CD14-positive monocyte (primary cell): ENCODE measurements at regions of chr18 and their contacts with region 1.

Region 1: DNA sequence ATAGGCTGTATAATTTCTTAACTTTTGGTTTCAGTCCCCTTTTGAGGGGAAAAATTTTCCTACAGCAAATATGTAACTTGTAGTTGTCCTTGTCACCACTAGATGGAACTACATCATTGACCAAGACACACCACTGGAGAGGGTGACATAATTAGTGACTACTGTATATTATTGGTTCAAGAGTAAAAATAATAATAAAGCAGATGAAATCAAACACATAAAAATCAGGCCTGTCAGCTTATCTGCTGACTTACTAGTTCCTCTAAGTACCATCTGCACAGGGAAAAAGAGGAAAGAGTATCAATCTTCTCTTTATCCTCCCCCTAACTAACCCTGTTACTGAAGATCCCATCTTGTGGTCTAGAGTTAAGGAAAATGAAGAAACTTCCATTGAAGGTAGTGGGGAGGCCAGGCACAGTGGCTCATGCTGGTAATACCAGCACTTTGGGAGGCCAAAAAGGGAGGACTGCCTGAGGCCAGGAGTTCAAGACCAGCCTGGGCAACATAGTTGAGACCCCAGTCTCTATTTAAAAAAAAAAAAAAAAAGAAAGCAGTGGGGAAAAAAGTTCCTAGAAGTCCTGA is 29.6 kb upstream of the ENOSF1 start:
- DNase-seq: peak; percentile 9 to 52 (median 45)
- H3K4me3 ChIP-seq: no peak overlapping the region
- H3K4me3 Mint-ChIP-seq: no peak overlapping the region
- H3K27ac ChIP-seq: no peak overlapping the region
- H3K27ac Mint-ChIP-seq: no peak overlapping the region
- H3K4me1 ChIP-seq: no peaks in the 10 kb centered on the region
- H3K4me1 Mint-ChIP-seq: no peaks in the 10 kb centered on the region
- H3K27me3 ChIP-seq: peaks cover 19 to 54% of the 10 kb centered on the region in 2 donors
- H3K27me3 Mint-ChIP-seq: peaks cover 23 to 35% (median 29%) of the 10 kb centered on the region in 3 donors
- CTCF ChIP-seq: peak; percentile 89

Region 2: GRCh38 chr18:765764-766549 is 23.9 kb after region 1 on chr18:
- intact Hi-C with region 1: no loop called
- DNase-seq: no peak
- H3K4me3 ChIP-seq: no peak overlapping the region
- H3K4me3 Mint-ChIP-seq: no peak overlapping the region
- H3K27ac ChIP-seq: no peak overlapping the region
- H3K27ac Mint-ChIP-seq: no peak overlapping the region
- H3K4me1 ChIP-seq: no peaks in the 10 kb centered on the region
- H3K4me1 Mint-ChIP-seq: no peaks in the 10 kb centered on the region
- H3K27me3 ChIP-seq: peaks cover 5 to 30% of the 10 kb centered on the region in 2 donors
- H3K27me3 Mint-ChIP-seq: peaks cover 25 to 42% (median 26%) of the 10 kb centered on the region in 3 donors
- CTCF ChIP-seq: no peak

Region 3: GRCh38 chr18:830315-830901 is 88.4 kb after region 1 on chr18:
- intact Hi-C with region 1: loop called in 1 of 2 experiments (anchors 5 kb)
- DNase-seq: peak; percentile 49 to 80 (median 61)
- H3K4me3 ChIP-seq: no peak overlapping the region
- H3K4me3 Mint-ChIP-seq: peak overlapping the region in 1 of 2 donors; percentile 85
- H3K27ac ChIP-seq: no peak overlapping the region
- H3K27ac Mint-ChIP-seq: peak overlapping the region in 1 of 7 donors; percentile 45
- H3K4me1 ChIP-seq: peaks cover 7 to 9% of the 10 kb centered on the region in 2 donors
- H3K4me1 Mint-ChIP-seq: peaks cover 10% of the 10 kb centered on the region
- H3K27me3 ChIP-seq: peaks cover 53 to 83% of the 10 kb centered on the region in 2 donors
- H3K27me3 Mint-ChIP-seq: peaks cover 83 to 89% (median 87%) of the 10 kb centered on the region in 3 donors
- CTCF ChIP-seq: no peak

Region 4: DNA sequence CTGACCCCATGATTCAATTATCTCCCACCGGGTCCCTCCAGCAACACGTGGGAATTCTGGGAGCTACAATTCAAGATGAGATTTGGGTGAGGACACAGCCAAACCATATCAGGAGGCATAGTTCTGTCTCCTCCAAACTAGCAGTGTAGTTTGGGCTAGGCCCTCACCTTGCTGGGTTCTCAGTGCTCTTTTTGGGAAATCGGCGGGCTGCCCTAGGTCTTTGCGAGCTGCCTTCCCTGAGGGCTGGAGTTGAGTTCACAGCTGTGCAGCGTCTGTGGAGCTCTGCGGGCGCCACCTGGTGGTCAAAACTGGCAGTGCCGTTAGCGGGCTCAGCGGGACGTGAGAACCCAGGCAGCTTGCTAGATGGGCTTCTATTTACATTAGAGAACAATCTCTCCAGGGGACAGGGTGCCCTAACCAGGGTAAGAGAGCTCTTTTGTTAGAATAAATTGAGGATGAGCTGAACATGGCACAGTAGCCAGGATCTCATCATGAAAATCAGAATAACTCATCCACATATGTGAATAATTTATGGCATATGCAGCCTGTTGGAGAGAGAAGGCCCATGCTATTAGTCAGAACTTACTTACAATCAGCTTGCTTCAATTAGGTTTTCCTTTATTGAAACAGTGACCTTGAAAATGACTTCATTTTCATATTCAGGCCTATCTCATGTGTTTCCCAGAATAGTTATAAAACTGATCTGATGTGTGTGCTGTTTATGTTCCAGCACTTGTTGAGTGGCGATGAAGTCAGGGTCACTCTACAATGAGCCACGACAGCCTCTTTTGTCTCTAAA is 97.4 kb after region 1 on chr18:
- intact Hi-C with region 1: loop called (anchors 2 to 5 kb)
- DNase-seq: peak; percentile 53 to 72 (median 59)
- H3K4me3 ChIP-seq: no peak overlapping the region
- H3K4me3 Mint-ChIP-seq: peak overlapping the region in 1 of 2 donors; percentile 72
- H3K27ac ChIP-seq: no peak overlapping the region
- H3K27ac Mint-ChIP-seq: no peak overlapping the region
- H3K4me1 ChIP-seq: no peaks in the 10 kb centered on the region
- H3K4me1 Mint-ChIP-seq: no peaks in the 10 kb centered on the region
- H3K27me3 ChIP-seq: peaks cover 40 to 49% of the 10 kb centered on the region in 2 donors
- H3K27me3 Mint-ChIP-seq: peaks cover 64 to 79% (median 70%) of the 10 kb centered on the region in 3 donors
- CTCF ChIP-seq: peak; percentile 93